Astrocyte of the cerebellum (primary cell): ENCODE measurements at regions of chr19 and their contacts with region 1.

Region 1: GRCh38 chr19:48795055-48795684 is 15.7 kb downstream of the BCAT2 start:
- DNase-seq: peak; percentile 86
- H3K4me3 ChIP-seq: peak overlapping the region; percentile 43
- CTCF ChIP-seq: peak; percentile 95

Region 2: GRCh38 chr19:48674921-48675824 is 120.0 kb before region 1 on chr19:
- in situ Hi-C with region 1: loop called (anchors 10 kb)
- DNase-seq: peak; percentile 65
- H3K4me3 ChIP-seq: no peak overlapping the region
- CTCF ChIP-seq: peak; percentile 88

Region 3: DNA sequence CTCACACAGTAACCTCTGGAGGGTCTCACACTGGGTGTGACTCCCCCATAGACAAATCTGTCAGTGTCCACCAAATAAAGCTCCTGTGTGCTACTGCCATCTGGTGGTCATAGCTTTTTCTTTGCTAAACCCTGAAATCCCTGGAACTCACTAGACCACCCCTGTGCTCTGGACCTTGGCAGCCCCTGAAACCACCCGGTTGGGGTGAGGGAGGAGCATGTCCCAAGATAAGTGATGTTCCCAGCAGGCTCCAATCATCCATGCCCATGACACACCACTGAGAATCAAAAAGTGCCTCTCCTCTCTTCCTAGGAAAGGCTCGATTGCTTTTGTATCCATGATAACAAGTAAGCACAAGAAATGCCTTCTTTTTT is 47.6 kb after region 1 on chr19:
- in situ Hi-C with region 1: loop called (anchors 10 kb)
- DNase-seq: no peak
- H3K4me3 ChIP-seq: no peak overlapping the region
- CTCF ChIP-seq: peak; percentile 87

Region 4: GRCh38 chr19:48989691-48990291 is 194.6 kb after region 1 on chr19:
- in situ Hi-C with region 1: loop called (anchors 5 kb)
- DNase-seq: no peak
- H3K4me3 ChIP-seq: no peak overlapping the region
- CTCF ChIP-seq: no peak